Naive thymus-derived CD4-positive, alpha-beta T cell (primary cell): ENCODE measurements at regions of chr4 and their contacts with region 1.

Region 1: DNA sequence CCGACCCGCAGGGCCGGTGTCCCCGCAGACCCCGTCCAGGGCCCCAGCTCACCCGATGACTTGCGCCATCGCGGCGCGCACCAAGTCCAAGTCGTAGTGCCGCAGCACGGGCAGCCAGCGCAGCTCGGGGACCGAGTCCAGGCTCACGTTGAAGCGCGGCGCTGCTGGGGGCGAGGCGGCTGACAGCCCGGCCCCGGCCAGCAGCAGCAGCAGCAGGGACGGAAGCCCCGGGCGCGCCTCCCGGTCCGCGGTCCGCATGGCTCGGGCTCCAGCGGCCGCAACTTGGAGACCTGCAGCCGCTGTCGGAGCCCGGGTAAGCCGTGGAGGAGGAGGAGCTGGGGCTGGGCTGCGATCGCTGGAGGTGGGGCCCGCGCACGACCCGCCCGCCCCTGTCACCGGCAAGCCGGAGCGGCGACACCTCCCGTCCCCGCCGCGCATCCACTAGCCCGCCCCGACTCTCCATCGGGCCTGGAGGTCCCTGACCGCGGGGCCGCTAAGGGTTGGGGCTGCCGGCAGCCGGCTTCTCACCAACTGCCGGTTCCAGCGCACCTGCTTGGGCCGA is at the start of gene NAAA:
- DNase-seq: peak; percentile 57 to 87 (median 75)
- ATAC-seq: peak; percentile 92
- H3K4me3 ChIP-seq: peak within 1 kb of the TSS; percentile 100
- H3K4me3 Mint-ChIP-seq: peak within 1 kb of the TSS; percentile 96 to 99 (median 98)
- H3K27ac ChIP-seq: peak within 1 kb of the TSS; percentile 80
- H3K27ac Mint-ChIP-seq: peak within 1 kb of the TSS; percentile 90 to 98 (median 94)
- H3K4me1 ChIP-seq: peaks cover 9 to 12% of the 10 kb centered on the region in 2 donors
- H3K4me1 Mint-ChIP-seq: peaks cover 12 to 34% (median 22%) of the 10 kb centered on the region in 7 donors
- H3K27me3 ChIP-seq: no peaks in the 10 kb centered on the region
- H3K27me3 Mint-ChIP-seq: no peaks in the 10 kb centered on the region
- total RNA-seq, gene NAAA: 36.9 to 103 (median 80.3) TPM

Region 2: GRCh38 chr4:75630174-75630936 is 310.4 kb before region 1 on chr4 and contains the start of gene CDKL2:
- CTCF ChIA-PET with region 1: no interaction called
- POLR2A ChIA-PET with region 1: no interaction called
- intact Hi-C with region 1: loop called in 1 of 2 experiments (anchors 1 kb)
- DNase-seq: peak; percentile 85 to 93 (median 91)
- ATAC-seq: peak; percentile 100
- H3K4me3 ChIP-seq: peak within 1 kb of the TSS; percentile 74
- H3K4me3 Mint-ChIP-seq: peak within 1 kb of the TSS; percentile 88 to 97 (median 94)
- H3K27ac ChIP-seq: peak within 1 kb of the TSS; percentile 73
- H3K27ac Mint-ChIP-seq: peak within 1 kb of the TSS; percentile 66 to 94 (median 86)
- H3K4me1 ChIP-seq: peaks cover 0 to 7% of the 10 kb centered on the region in 2 donors
- H3K4me1 Mint-ChIP-seq: peaks cover 6 to 18% (median 11%) of the 10 kb centered on the region in 7 donors
- H3K27me3 ChIP-seq: no peaks in the 10 kb centered on the region
- H3K27me3 Mint-ChIP-seq: peaks cover 0 to 12% (median 0%) of the 10 kb centered on the region in 5 donors
- total RNA-seq, gene CDKL2: 0.22 to 1.2 (median 0.34) TPM

Region 3: GRCh38 chr4:75895744-75896314 is 44.9 kb before region 1 on chr4:
- CTCF ChIA-PET with region 1: interaction called, 5 read pairs
- POLR2A ChIA-PET with region 1: interaction called, 6 read pairs
- intact Hi-C with region 1: loop called in 1 of 2 experiments (anchors 1 kb)
- DNase-seq: peak in 5 of 9 donors; percentile 17 to 48 (median 31)
- ATAC-seq: peak; percentile 76
- H3K4me3 ChIP-seq: no peak overlapping the region
- H3K4me3 Mint-ChIP-seq: no peak overlapping the region
- H3K27ac ChIP-seq: no peak overlapping the region
- H3K27ac Mint-ChIP-seq: no peak overlapping the region
- H3K4me1 ChIP-seq: no peaks in the 10 kb centered on the region
- H3K4me1 Mint-ChIP-seq: peaks cover 0 to 5% (median 0%) of the 10 kb centered on the region in 7 donors
- H3K27me3 ChIP-seq: no peaks in the 10 kb centered on the region
- H3K27me3 Mint-ChIP-seq: peaks cover 0 to 6% (median 0%) of the 10 kb centered on the region in 5 donors

Region 4: DNA sequence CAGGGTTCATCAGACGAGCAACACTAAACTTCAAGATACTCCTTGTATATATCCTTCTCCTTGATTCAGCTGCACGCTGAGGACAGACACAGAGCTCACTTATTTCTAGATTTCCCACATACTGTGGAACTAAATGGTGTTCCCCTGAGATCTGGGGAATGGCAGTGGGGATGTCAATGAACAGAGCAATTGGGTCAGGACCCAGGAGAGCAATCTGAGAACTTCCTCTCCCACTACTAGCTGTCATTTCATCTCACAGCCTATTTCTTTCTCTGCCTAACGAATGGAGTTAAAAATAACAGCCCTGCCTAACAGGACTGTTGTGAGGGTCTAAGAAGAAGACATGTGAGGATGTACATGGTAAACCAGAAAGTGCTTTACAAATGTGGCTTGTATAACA is 10.6 kb before region 1 on chr4:
- CTCF ChIA-PET with region 1: no interaction called
- POLR2A ChIA-PET with region 1: interaction called, 10 read pairs
- intact Hi-C with region 1: no loop called
- DNase-seq: no peak
- ATAC-seq: no peak
- H3K4me3 ChIP-seq: no peak overlapping the region
- H3K4me3 Mint-ChIP-seq: no peak overlapping the region
- H3K27ac ChIP-seq: no peak overlapping the region
- H3K27ac Mint-ChIP-seq: peak overlapping the region in 1 of 9 donors; percentile 51
- H3K4me1 ChIP-seq: no peaks in the 10 kb centered on the region
- H3K4me1 Mint-ChIP-seq: peaks cover 0 to 12% (median 5%) of the 10 kb centered on the region in 7 donors
- H3K27me3 ChIP-seq: no peaks in the 10 kb centered on the region
- H3K27me3 Mint-ChIP-seq: no peaks in the 10 kb centered on the region

Region 5: GRCh38 chr4:75989846-75990528 is 49.2 kb after region 1 on chr4:
- CTCF ChIA-PET with region 1: no interaction called
- POLR2A ChIA-PET with region 1: interaction called, 23 read pairs
- intact Hi-C with region 1: loop called (anchors 1 kb)
- DNase-seq: peak in 4 of 9 donors; percentile 2 to 7 (median 4)
- ATAC-seq: no peak
- H3K4me3 ChIP-seq: peak overlapping the region; percentile 86
- H3K4me3 Mint-ChIP-seq: peak overlapping the region; percentile 87 to 98 (median 96)
- H3K27ac ChIP-seq: peak overlapping the region; percentile 86
- H3K27ac Mint-ChIP-seq: peak overlapping the region; percentile 85 to 97 (median 93)
- H3K4me1 ChIP-seq: peaks cover 13 to 39% of the 10 kb centered on the region in 2 donors
- H3K4me1 Mint-ChIP-seq: peaks cover 24 to 38% (median 30%) of the 10 kb centered on the region in 7 donors
- H3K27me3 ChIP-seq: no peaks in the 10 kb centered on the region
- H3K27me3 Mint-ChIP-seq: peaks cover 0 to 8% (median 2%) of the 10 kb centered on the region in 5 donors

Region 6: GRCh38 chr4:76148142-76148865 is 207.5 kb after region 1 on chr4 and contains the start of gene NUP54:
- CTCF ChIA-PET with region 1: interaction called, 3 read pairs
- POLR2A ChIA-PET with region 1: interaction called, 11 read pairs
- intact Hi-C with region 1: loop called (anchors 1 kb)
- DNase-seq: peak; percentile 85 to 96 (median 92)
- ATAC-seq: peak; percentile 99
- H3K4me3 ChIP-seq: peak within 1 kb of the TSS; percentile 85
- H3K4me3 Mint-ChIP-seq: peak within 1 kb of the TSS; percentile 90 to 100 (median 96)
- H3K27ac ChIP-seq: peak within 1 kb of the TSS; percentile 93
- H3K27ac Mint-ChIP-seq: peak within 1 kb of the TSS; percentile 91 to 99 (median 94)
- H3K4me1 ChIP-seq: peaks cover 12% of the 10 kb centered on the region in 2 donors
- H3K4me1 Mint-ChIP-seq: peaks cover 21 to 52% (median 45%) of the 10 kb centered on the region in 7 donors
- H3K27me3 ChIP-seq: no peaks in the 10 kb centered on the region
- H3K27me3 Mint-ChIP-seq: no peaks in the 10 kb centered on the region
- total RNA-seq, gene NUP54: 51.1 to 82.0 (median 65.5) TPM